ENCODE measurements at regions of chr4 and their contacts with region 1.

Region 1: GRCh38 chr4:183840311-183840710 is 64.8 kb upstream of the STOX2 start:
- DNase-seq: peak; percentile 76 to 84
- ATAC-seq: peak; percentile 59 to 90 (median 79)
- H3K4me3 ChIP-seq: no peak overlapping the region
- H3K27ac ChIP-seq: no peak overlapping the region
- H3K4me1 ChIP-seq: peaks cover 0 to 15% (median 7%) of the 10 kb centered on the region in 9 donors
- H3K27me3 ChIP-seq: no peaks in the 10 kb centered on the region
- CTCF ChIP-seq: peak; percentile 74 to 96 (median 90)

Region 2: GRCh38 chr4:183571350-183571941 is 268.9 kb before region 1 on chr4:
- intact Hi-C with region 1: no loop called
- DNase-seq: peak in 1 of 2 donors; percentile 17
- ATAC-seq: peak in 4 of 8 donors; percentile 20 to 83 (median 64)
- H3K4me3 ChIP-seq: no peak overlapping the region
- H3K27ac ChIP-seq: no peak overlapping the region
- H3K4me1 ChIP-seq: peaks cover 0 to 9% (median 5%) of the 10 kb centered on the region in 9 donors
- H3K27me3 ChIP-seq: peaks cover 0 to 4% (median under 1%) of the 10 kb centered on the region in 7 donors
- CTCF ChIP-seq: no peak

Region 3: DNA sequence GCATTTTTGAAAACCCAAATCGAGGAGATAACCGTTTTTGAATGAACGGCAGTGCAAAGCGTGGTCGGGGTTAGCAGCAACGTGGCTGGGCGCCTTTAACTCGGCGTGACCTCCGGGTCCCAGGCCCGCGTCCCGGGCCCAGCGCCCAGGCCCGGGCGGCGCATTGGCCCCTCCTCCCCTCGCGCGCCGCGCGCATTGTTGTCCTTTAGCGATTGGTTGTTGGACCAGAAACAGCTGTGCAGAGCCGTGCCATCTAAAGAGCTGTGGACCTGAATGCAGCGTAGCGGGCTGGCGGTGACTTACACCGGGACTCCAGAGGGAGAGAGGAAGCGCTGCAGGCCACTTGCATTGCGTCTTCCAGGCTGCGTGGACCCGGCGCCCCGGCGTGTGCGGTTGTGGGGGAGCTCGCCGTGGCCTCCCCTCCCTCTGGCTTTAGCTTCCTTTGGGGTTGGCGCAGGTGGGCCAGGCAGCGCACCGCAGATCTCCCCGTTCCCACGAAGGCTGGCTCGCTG is 64.8 kb after region 1 on chr4 and contains the start of gene STOX2:
- intact Hi-C with region 1: loop called in 5 of 10 experiments (anchors 1 to 10 kb)
- DNase-seq: peak; percentile 88
- ATAC-seq: peak; percentile 92 to 97 (median 95)
- H3K4me3 ChIP-seq: peak within 1 kb of the TSS; percentile 51 to 93 (median 76)
- H3K27ac ChIP-seq: peak within 1 kb of the TSS; percentile 77 to 92 (median 89)
- H3K4me1 ChIP-seq: peaks cover 0 to 50% (median 25%) of the 10 kb centered on the region in 9 donors
- H3K27me3 ChIP-seq: peaks cover 0 to 44% (median 0%) of the 10 kb centered on the region in 7 donors
- CTCF ChIP-seq: no peak
- total RNA-seq, gene STOX2: 8.3 to 25.5 (median 13.9) TPM

Region 4: GRCh38 chr4:184094532-184095159 is 254.3 kb after region 1 on chr4:
- intact Hi-C with region 1: loop called in 4 of 10 experiments (anchors 1 to 2 kb)
- DNase-seq: no peak
- ATAC-seq: no peak
- H3K4me3 ChIP-seq: no peak overlapping the region
- H3K27ac ChIP-seq: no peak overlapping the region
- H3K4me1 ChIP-seq: peaks cover 0 to 26% (median 3%) of the 10 kb centered on the region in 9 donors
- H3K27me3 ChIP-seq: no peaks in the 10 kb centered on the region
- CTCF ChIP-seq: no peak

Region 5: GRCh38 chr4:184156163-184156920 is 316.0 kb after region 1 on chr4:
- intact Hi-C with region 1: loop called in 1 of 10 experiments (anchors 1 kb)
- DNase-seq: no peak
- ATAC-seq: peak in 7 of 8 donors; percentile 27 to 90 (median 56)
- H3K4me3 ChIP-seq: no peak overlapping the region
- H3K27ac ChIP-seq: peak overlapping the region in 5 of 10 donors; percentile 1 to 63 (median 32)
- H3K4me1 ChIP-seq: peaks cover 0 to 21% (median 13%) of the 10 kb centered on the region in 9 donors
- H3K27me3 ChIP-seq: peaks cover 0 to 8% (median 0%) of the 10 kb centered on the region in 7 donors
- CTCF ChIP-seq: no peak

Measured in heart right ventricle (tissue), 16 donors.